ENCODE measurements at regions of chr22 and their contacts with region 1.

Region 1: GRCh38 chr22:29603358-29604075 is at the start of gene NF2:
- DNase-seq: peak; percentile 94 to 99
- ATAC-seq: peak; percentile 98
- H3K4me3 ChIP-seq: peak within 1 kb of the TSS; percentile 63
- H3K27ac ChIP-seq: peak within 1 kb of the TSS; percentile 85 to 98
- H3K4me1 ChIP-seq: peaks cover 10% of the 10 kb centered on the region; the same call in 2 of the 3 replicates
- CTCF ChIP-seq: no peak
- EP300 ChIP-seq: no peak
- POLR2A ChIP-seq: peak; percentile 53
- RAD21 ChIP-seq: peak in 1 of 2 experiments; percentile 18; a peak in 1 of 5 replicates
- polyA plus RNA-seq, gene NF2: 16.5 and 23.7 TPM in 2 replicates

Region 2: DNA sequence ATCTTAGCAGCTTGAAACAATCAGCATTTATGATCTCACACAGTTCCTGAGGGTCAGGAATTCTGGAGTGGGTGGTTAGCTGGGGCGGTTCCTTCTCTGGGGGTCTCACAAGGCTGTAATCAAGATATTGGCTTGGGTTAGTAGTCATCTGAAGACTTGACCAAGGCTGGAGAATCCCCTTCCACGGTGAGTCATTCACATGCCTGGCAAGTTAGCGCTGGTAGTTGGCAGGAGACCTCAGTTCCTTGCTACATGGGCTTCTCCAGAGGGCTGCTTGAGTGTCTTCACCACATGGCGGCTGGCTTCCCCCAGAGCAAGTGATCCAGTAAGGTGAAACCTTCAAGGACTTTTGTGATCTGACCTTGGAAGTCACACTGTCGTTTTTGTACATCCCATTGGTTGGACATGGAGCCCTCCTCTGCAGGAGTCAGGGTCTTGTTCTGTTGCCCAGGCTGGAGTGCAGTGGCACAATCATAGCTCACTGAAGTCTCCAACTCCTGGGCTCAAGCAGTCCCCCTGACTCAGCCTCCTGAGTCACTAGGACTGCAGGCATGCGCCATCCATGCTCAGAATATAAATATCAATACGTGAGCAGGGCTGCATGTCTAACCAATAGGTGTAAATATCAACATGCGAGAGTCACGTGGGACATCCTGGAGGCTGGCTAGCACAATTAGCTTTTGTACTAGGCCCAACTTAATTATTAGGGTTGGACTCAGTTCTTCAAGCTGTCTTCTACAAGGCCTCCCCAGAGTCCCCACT is 15.4 kb before region 1 on chr22:
- CTCF ChIA-PET with region 1: interaction called, 30 read pairs
- POLR2A ChIA-PET with region 1: no interaction called
- DNase-seq: peak; percentile 36 to 54
- ATAC-seq: peak; percentile 81 to 84; a peak in 5 of 6 replicates
- H3K4me3 ChIP-seq: no peak overlapping the region
- H3K27ac ChIP-seq: peak overlapping the region in 1 of 2 experiments; percentile 63; a peak in 3 of 6 replicates
- H3K4me1 ChIP-seq: peaks cover 8% of the 10 kb centered on the region
- CTCF ChIP-seq: no peak
- EP300 ChIP-seq: no peak
- POLR2A ChIP-seq: no peak
- RAD21 ChIP-seq: no peak

Region 3: GRCh38 chr22:29625090-29625825 is 21.7 kb after region 1 on chr22:
- CTCF ChIA-PET with region 1: interaction called, 24 read pairs
- POLR2A ChIA-PET with region 1: interaction called, 3 read pairs
- DNase-seq: peak; percentile 38 to 69
- ATAC-seq: peak; percentile 52 to 61; a peak in 3 of 6 replicates
- H3K4me3 ChIP-seq: no peak overlapping the region
- H3K27ac ChIP-seq: peak overlapping the region; percentile 37 to 94; a peak in 5 of 6 replicates
- H3K4me1 ChIP-seq: peaks cover 78% of the 10 kb centered on the region
- CTCF ChIP-seq: peak; percentile 85
- EP300 ChIP-seq: no peak
- POLR2A ChIP-seq: no peak
- RAD21 ChIP-seq: peak; percentile 51 to 54; a peak in 4 of 5 replicates

Measured in A549 (cell line).